Psoas muscle (tissue), 8 donors: ENCODE measurements at regions of chr14 and their contacts with region 1.

Region 1: DNA sequence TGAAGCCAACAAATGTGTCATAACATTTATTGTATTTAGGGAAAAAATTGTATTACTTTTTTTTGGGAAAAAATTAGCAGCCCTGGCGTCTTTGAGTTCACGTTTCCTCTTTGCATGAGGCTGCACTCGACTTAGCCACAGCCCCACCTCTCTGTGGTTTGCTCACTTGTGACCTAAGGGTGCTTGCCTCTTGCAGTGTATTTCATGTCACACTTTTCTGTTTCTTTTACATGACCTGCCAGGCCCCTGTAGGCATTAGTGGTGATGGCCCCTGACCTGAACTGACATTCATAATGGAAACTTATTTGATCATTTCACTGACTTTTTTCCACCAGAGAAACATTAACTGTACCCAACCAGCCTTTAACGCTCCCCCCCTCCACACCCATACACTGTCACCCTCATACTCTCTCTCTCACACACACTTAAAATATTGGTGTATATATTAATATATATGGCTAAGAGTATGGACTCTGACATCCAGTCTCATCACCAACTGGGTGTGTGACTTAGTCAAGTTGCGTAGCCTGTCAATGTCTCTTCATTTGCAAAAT is 122.9 kb downstream of the PRKCH start:
- DNase-seq: no peak
- ATAC-seq: no peak
- H3K4me3 ChIP-seq: no peak overlapping the region
- H3K27ac ChIP-seq: no peak overlapping the region
- H3K4me1 ChIP-seq: peaks cover 12% of the 10 kb centered on the region
- H3K27me3 ChIP-seq: no peaks in the 10 kb centered on the region
- CTCF ChIP-seq: no peak

Region 2: DNA sequence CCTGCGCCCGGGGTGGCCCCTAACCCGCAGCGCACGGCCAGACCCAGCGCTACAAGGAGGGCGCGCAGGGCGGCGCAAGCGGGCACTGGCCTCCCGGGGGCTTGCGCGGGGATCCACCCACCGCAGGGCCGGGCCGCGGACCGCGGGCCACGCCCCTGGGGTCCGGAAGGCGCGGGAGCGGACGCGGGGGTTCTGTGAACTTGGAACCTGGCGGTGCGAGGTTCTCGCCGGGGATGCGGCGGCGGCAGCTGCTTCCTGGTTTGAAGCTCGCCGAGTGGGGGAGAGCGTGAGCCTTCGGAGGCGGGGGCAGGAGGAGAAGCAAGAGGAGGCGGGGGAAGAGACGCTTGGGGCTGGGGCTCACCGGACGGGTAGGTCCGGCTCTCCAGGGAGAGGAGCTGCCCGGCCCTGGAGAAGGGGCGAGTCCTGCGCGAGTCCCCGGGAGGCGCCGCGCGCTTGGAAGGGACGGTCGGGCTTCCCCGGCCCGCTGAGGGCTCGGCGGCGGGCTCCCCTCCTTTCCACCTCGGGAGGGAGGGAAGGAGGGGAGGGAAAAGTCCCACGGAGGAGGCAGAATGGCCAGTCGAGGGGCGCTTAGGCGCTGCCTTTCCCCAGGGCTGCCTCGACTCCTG is 122.8 kb before region 1 on chr14 and contains the start of gene PRKCH:
- intact Hi-C with region 1: loop called in 1 of 2 experiments (anchors 10 kb)
- DNase-seq: peak; percentile 72 to 85
- ATAC-seq: peak; percentile 73 to 86 (median 78)
- H3K4me3 ChIP-seq: peak within 1 kb of the TSS; percentile 83
- H3K27ac ChIP-seq: peak within 1 kb of the TSS; percentile 76
- H3K4me1 ChIP-seq: no peaks in the 10 kb centered on the region
- H3K27me3 ChIP-seq: peaks cover 0 to 11% (median 0%) of the 10 kb centered on the region in 3 donors
- CTCF ChIP-seq: peak; percentile 4
- total RNA-seq, gene PRKCH: 11.1 to 17.9 (median 15.4) TPM

Region 3: GRCh38 chr14:61388173-61388975 is 55.9 kb before region 1 on chr14:
- intact Hi-C with region 1: no loop called
- DNase-seq: no peak
- ATAC-seq: peak; percentile 57 to 81 (median 73)
- H3K4me3 ChIP-seq: no peak overlapping the region
- H3K27ac ChIP-seq: peak overlapping the region; percentile 66
- H3K4me1 ChIP-seq: peaks cover 31% of the 10 kb centered on the region
- H3K27me3 ChIP-seq: no peaks in the 10 kb centered on the region
- CTCF ChIP-seq: no peak

Region 4: GRCh38 chr14:61461808-61462275 is 17.6 kb after region 1 on chr14:
- intact Hi-C with region 1: no loop called
- DNase-seq: no peak
- ATAC-seq: peak; percentile 63 to 82 (median 72)
- H3K4me3 ChIP-seq: no peak overlapping the region
- H3K27ac ChIP-seq: no peak overlapping the region
- H3K4me1 ChIP-seq: no peaks in the 10 kb centered on the region
- H3K27me3 ChIP-seq: no peaks in the 10 kb centered on the region
- CTCF ChIP-seq: peak; percentile 89